ENCODE measurements at regions of chr2 and their contacts with region 1.

Region 1: GRCh38 chr2:108958002-108958401 is 31.0 kb downstream of the EDAR start:
- DNase-seq: peak; percentile 33 to 52
- H3K4me3 ChIP-seq: no peak overlapping the region
- H3K4me3 Mint-ChIP-seq: peak overlapping the region; percentile 37
- H3K27ac Mint-ChIP-seq: peak overlapping the region; percentile 75
- H3K4me1 ChIP-seq: peaks cover 29% of the 10 kb centered on the region
- H3K4me1 Mint-ChIP-seq: peaks cover 21% of the 10 kb centered on the region
- H3K27me3 ChIP-seq: no peaks in the 10 kb centered on the region
- H3K27me3 Mint-ChIP-seq: no peaks in the 10 kb centered on the region
- CTCF ChIP-seq: no peak

Region 2: GRCh38 chr2:108982259-108982691 is 24.3 kb after region 1 on chr2:
- CTCF ChIA-PET with region 1: no interaction called
- POLR2A ChIA-PET with region 1: no interaction called
- intact Hi-C with region 1: loop called (anchors 2 kb)
- DNase-seq: peak in 1 of 2 experiments; percentile 53
- H3K4me3 ChIP-seq: no peak overlapping the region
- H3K4me3 Mint-ChIP-seq: no peak overlapping the region
- H3K27ac Mint-ChIP-seq: no peak overlapping the region
- H3K4me1 ChIP-seq: peaks cover 18% of the 10 kb centered on the region
- H3K4me1 Mint-ChIP-seq: peaks cover 7% of the 10 kb centered on the region
- H3K27me3 ChIP-seq: no peaks in the 10 kb centered on the region
- H3K27me3 Mint-ChIP-seq: no peaks in the 10 kb centered on the region
- CTCF ChIP-seq: no peak